A549 (cell line): ENCODE measurements at regions of chr14 and their contacts with region 1.

Region 1: DNA sequence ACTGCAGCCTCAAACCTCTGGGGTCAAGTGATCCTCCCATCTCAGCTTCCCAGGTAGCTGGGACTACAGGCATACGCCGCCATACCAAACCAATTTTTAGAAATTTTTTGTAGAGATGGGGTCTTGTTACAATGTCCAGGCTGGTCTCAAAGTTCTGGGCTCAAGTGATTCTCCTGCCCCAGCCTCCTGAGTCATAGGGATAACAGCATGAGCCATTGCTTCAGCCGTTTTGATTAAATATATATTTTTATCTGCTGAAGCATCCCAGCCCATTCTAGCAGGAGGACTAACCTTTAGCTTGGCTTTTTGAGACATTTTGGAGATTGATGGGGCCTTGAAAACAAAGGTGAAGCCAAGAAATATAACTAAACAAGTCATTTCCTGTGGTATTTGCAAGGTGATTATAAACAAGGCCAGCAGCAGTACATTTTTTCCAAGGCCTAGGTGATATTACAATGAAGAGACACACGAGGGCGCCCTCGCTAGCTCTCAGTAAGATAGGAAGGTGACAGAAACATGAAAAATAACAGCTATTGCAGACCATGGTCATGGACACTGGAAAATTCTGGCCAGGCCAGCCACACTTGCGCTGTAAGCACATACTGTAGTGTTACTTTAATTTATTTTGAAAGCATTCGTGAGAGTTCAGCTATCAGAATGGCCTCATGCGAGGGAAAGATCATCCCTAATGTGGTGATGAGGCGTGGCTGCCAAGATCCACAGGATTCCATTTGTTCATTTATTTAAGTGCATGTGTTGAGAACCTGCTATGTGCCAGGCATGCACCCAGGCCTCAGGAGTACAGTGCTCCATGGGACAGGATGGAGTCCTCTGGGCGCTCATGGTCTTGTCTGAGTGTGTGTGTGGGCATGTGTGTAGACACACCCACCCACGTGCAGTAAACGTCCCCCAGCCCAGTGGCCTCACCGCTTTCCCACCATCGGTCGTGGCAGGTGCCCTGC is 63.5 kb downstream of the DGLUCY start:
- DNase-seq: peak; percentile 63 to 66
- ATAC-seq: peak; percentile 76 to 81
- H3K4me3 ChIP-seq: no peak overlapping the region
- H3K27ac ChIP-seq: no peak overlapping the region
- H3K4me1 ChIP-seq: no peaks in the 10 kb centered on the region
- CTCF ChIP-seq: peak; percentile 76
- EP300 ChIP-seq: no peak
- POLR2A ChIP-seq: no peak
- RAD21 ChIP-seq: peak; percentile 66 to 70

Region 2: DNA sequence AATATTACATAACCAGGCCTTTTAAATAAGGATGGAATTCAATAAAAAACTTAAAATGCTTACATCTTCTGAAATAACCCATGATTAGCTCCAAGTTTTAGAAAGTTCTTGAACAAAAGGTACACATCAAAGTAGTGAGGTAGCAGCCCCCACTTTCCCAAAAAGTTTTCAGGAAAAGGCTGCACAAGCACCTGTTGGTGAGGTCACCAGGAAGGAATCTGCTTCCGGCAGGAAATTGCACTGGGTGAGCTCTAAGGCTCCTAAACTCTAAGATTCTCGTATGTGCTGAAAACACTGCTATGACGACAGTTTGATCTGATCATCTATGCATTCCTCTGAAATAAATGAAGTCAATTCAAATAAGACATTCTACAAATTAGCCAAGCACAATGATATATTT is 326.9 kb before region 1 on chr14:
- CTCF ChIA-PET with region 1: no interaction called
- POLR2A ChIA-PET with region 1: no interaction called
- DNase-seq: no peak
- ATAC-seq: peak in 1 of 2 experiments; percentile 38; a peak in 1 of 6 replicates
- H3K4me3 ChIP-seq: no peak overlapping the region
- H3K27ac ChIP-seq: no peak overlapping the region
- H3K4me1 ChIP-seq: peaks cover 3% of the 10 kb centered on the region; the same call in 1 of the 3 replicates
- CTCF ChIP-seq: no peak
- EP300 ChIP-seq: no peak
- POLR2A ChIP-seq: no peak
- RAD21 ChIP-seq: no peak

Region 3: GRCh38 chr14:90894241-90894640 is 283.1 kb before region 1 on chr14:
- CTCF ChIA-PET with region 1: interaction called, 19 read pairs
- POLR2A ChIA-PET with region 1: interaction called, 3 read pairs
- DNase-seq: no peak
- ATAC-seq: no peak
- H3K4me3 ChIP-seq: no peak overlapping the region
- H3K27ac ChIP-seq: no peak overlapping the region
- H3K4me1 ChIP-seq: no peaks in the 10 kb centered on the region
- CTCF ChIP-seq: no peak
- EP300 ChIP-seq: no peak
- POLR2A ChIP-seq: no peak
- RAD21 ChIP-seq: no peak

Region 4: DNA sequence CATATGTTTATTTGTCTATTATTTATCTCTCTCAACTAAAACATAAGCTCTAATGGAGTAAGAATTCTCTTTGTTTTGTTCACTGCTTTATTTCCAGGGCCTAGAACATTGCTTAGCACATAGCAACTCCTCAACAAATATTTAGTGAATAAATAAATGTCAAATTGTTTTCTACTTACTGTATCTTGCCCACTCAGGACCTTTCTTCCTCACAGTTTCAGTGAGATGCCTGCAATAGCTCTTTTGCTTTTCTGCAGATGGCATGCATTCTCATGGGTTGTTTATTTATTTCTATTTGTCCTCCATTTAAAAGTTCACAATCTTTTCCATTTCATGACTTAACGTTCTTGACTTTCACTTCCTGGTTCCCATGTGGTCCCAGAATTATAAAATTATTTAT is 266.2 kb before region 1 on chr14:
- CTCF ChIA-PET with region 1: interaction called, 25 read pairs
- POLR2A ChIA-PET with region 1: no interaction called
- DNase-seq: peak in 1 of 2 experiments; percentile 1
- ATAC-seq: no peak
- H3K4me3 ChIP-seq: no peak overlapping the region
- H3K27ac ChIP-seq: no peak overlapping the region
- H3K4me1 ChIP-seq: 0 out of 3 replicates have a peak, but pooled peaks cover 4% of the 10 kb centered on the region
- CTCF ChIP-seq: no peak
- EP300 ChIP-seq: no peak
- POLR2A ChIP-seq: no peak
- RAD21 ChIP-seq: no peak

Region 5: DNA sequence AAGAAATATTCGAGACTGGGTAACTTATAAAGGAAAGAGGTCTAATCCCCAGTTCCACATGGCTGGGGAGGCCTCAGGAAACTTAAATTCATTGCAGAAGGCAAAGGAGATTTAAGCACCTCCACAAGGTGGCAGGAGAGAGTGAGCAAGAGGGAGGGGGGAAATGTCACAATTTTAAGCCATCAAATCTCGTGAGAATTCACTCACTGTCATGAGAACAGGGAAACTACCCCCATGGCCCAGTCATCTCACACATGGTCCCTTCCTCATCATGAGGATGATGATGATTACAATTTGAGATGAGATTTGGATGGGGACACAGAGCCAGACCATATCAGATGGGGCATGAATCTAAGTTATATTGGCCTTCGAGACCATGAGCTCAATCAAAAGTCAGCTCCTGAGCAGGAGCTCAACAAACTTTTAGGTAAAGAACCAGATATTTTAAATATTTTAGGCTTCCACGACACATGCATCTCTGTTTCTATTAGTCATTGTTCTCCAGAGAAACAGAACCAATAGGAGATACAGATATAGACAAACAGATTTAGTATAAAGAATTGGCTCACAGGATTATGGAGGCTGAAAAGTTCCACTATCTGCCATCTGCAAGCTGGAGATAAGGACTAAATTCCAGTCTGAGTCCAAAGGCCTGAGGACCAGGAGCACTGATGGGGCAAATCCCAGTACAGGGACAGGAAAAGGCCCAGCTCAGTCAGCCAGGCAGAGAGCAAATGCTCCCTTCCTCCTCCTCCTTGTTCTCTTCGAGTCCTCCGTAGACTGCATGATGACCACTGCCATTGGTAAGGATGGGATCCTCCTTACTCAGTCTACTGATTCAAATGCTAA is 38.6 kb before region 1 on chr14:
- CTCF ChIA-PET with region 1: interaction called, 16 read pairs
- POLR2A ChIA-PET with region 1: no interaction called
- DNase-seq: peak; percentile 28 to 62
- ATAC-seq: peak; percentile 54 to 70; a peak in 3 of 6 replicates
- H3K4me3 ChIP-seq: no peak overlapping the region
- H3K27ac ChIP-seq: no peak overlapping the region
- H3K4me1 ChIP-seq: 0 out of 3 replicates have a peak, but pooled peaks cover 5% of the 10 kb centered on the region
- CTCF ChIP-seq: peak; percentile 41
- EP300 ChIP-seq: no peak
- POLR2A ChIP-seq: no peak
- RAD21 ChIP-seq: peak; percentile 26 to 37; a peak in 2 of 5 replicates

Region 6: DNA sequence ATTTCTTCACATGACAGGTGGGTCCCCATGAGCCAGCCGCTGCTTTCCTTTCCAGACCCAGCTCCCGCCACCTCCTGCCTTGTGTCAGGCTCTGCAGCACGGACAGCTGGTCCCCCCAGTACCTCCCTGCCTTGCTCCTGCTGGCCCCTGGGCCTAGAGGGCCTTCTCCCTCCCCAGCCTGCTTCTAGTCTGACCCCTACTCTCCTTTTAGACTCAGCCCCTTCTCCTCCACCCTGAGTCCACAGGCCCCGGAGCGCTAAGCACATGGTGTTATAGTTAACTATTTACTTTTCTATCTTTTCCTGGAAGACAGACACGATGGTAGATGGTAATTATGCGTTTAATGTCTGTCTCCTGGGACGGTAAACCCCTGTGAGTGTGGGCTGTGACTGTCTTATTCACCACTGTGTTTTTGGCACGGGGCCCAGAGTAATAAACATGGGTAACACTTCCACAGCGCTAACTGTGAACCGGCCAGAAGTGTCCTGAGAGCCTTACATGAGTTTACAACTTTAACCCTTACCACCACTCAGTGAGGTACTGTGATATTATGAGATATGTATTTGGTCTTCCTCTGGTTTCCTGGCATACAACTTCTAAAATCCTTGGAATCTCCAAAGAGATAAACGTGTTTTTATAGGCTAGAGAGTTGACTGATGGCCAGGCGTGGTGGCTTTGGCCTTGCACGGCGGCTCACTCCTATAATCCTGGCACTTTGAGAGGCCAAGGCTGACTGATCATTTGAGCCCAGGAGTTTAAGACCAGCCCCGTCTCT is 22.3 kb before region 1 on chr14:
- CTCF ChIA-PET with region 1: interaction called, 15 read pairs
- POLR2A ChIA-PET with region 1: no interaction called
- DNase-seq: peak in 1 of 2 experiments; percentile 30
- ATAC-seq: peak; percentile 34 to 74; a peak in 5 of 6 replicates
- H3K4me3 ChIP-seq: no peak overlapping the region
- H3K27ac ChIP-seq: peak overlapping the region; percentile 36 to 48; a peak in 4 of 6 replicates
- H3K4me1 ChIP-seq: peaks cover 26% of the 10 kb centered on the region
- CTCF ChIP-seq: no peak
- EP300 ChIP-seq: no peak
- POLR2A ChIP-seq: no peak
- RAD21 ChIP-seq: no peak

Region 7: GRCh38 chr14:91193069-91193468 is 15.7 kb after region 1 on chr14:
- CTCF ChIA-PET with region 1: interaction called, 21 read pairs
- POLR2A ChIA-PET with region 1: no interaction called
- DNase-seq: no peak
- ATAC-seq: no peak
- H3K4me3 ChIP-seq: no peak overlapping the region
- H3K27ac ChIP-seq: no peak overlapping the region
- H3K4me1 ChIP-seq: no peaks in the 10 kb centered on the region
- CTCF ChIP-seq: no peak
- EP300 ChIP-seq: no peak
- POLR2A ChIP-seq: no peak
- RAD21 ChIP-seq: no peak

Region 8: GRCh38 chr14:91281346-91281745 is 104.0 kb after region 1 on chr14:
- CTCF ChIA-PET with region 1: interaction called, 169 read pairs
- POLR2A ChIA-PET with region 1: no interaction called
- DNase-seq: no peak
- ATAC-seq: no peak
- H3K4me3 ChIP-seq: no peak overlapping the region
- H3K27ac ChIP-seq: no peak overlapping the region
- H3K4me1 ChIP-seq: no peaks in the 10 kb centered on the region
- CTCF ChIP-seq: no peak
- EP300 ChIP-seq: no peak
- POLR2A ChIP-seq: no peak
- RAD21 ChIP-seq: no peak